Activated T-helper 2 cell treated with anti-CD3 and anti-CD28 coated beads, Interferon-gamma antibody, Interleukin-2, Interleukin-4, amounts not matched to agents 10 μg/mL and 5 μg/mL and 100 μg/mL, durations not matched to agents 14 hours and 24 hours and 36 hours (primary cell): ENCODE measurements at regions of chr9 and their contacts with region 1.

Region 1: GRCh38 chr9:128218518-128219389 is 15.6 kb downstream of the DNM1 start:
- DNase-seq: peak; percentile 94
- H3K4me3 Mint-ChIP-seq: peak overlapping the region; percentile 77
- H3K27ac Mint-ChIP-seq: peak overlapping the region; percentile 26
- H3K4me1 Mint-ChIP-seq: peaks cover 11% of the 10 kb centered on the region
- H3K27me3 Mint-ChIP-seq: no peaks in the 10 kb centered on the region

Region 2: DNA sequence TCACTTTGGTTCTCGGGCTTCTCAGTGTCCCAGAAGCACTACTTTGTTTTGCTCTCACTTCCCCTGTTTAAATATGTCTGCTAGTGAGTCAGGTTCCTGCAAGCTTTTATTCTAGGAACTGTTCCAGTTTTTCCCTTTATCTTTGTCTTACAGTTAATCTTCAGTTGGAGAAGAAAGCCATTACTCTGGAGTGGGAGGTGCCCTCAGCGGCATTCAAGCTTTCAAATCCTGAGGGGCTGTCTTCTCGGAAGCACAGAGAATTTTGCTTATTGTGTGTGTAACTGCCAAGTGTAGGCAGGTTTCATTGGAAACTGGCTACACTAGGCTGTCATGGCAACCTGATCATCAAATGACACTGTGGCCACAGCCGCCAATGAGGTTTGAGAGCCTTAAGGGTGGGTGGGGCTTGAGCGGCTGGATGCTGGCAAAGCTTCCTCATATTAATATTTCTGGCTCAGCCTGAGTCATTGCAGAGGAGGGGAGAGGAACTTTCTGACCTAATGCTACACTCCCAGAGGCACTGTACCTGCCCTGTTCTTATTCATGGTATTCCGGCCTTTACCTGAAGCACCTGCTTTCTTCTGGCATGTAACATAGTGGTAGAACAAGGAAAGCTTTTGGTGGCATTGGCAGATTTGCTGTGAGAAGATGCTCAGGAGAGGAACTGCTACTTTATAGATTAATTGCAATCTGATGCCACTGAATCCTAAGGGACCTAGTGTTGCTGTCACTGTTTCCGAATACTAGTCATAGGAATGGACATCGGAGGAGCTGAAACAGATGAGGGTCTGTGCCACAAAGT is 124.4 kb before region 1 on chr9:
- intact Hi-C with region 1: no loop called
- DNase-seq: peak; percentile 77
- H3K4me3 Mint-ChIP-seq: peak overlapping the region; percentile 60
- H3K27ac Mint-ChIP-seq: peak overlapping the region; percentile 98
- H3K4me1 Mint-ChIP-seq: peaks cover 66% of the 10 kb centered on the region
- H3K27me3 Mint-ChIP-seq: no peaks in the 10 kb centered on the region

Region 3: DNA sequence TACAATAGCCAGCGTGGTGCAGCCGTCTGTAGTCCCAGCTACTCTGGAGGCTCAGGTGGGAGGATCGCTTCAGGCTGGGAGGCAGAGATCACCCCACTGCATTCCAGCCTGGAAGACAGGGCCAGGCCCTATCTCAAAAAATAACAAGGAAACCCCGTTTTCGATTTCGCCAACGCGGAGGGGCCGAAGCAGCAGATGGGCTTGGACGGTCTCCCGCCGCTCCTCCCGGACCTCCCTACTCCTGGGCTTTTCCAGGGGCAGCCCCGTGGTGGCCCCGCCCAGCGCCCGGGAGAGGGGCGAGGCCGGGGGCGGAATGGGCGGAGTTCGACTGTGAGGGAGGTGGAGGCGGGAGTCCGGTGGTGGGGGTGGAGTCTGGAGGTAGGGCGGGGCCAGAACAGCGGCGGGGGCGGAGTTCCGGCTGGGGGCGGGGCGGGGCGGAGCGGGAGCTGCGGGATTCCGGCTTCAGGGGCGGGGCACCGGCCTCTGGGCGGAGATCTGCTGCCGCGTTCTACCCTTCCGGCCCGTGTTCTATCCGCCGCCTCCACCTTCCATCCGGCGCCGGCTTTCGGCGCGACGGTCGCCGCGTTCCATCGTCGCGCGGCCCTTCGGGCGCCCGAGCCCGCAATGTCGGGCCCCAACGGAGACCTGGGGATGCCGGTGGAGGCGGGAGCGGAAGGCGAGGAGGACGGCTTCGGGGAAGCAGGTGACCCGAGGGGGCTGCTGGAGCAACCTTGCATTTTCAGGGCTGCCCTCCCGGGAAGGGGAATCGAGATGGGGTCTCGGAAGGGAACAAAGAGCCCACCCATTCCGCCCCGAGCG is 58.8 kb before region 1 on chr9 and contains the start of gene BBLN:
- intact Hi-C with region 1: loop called (anchors 2 kb)
- DNase-seq: peak; percentile 90
- H3K4me3 Mint-ChIP-seq: peak within 1 kb of the TSS; percentile 81
- H3K27ac Mint-ChIP-seq: peak within 1 kb of the TSS; percentile 83
- H3K4me1 Mint-ChIP-seq: peaks cover 17% of the 10 kb centered on the region
- H3K27me3 Mint-ChIP-seq: no peaks in the 10 kb centered on the region
- total RNA-seq, gene BBLN: 93.8 and 103 TPM in 2 replicates

Region 4: DNA sequence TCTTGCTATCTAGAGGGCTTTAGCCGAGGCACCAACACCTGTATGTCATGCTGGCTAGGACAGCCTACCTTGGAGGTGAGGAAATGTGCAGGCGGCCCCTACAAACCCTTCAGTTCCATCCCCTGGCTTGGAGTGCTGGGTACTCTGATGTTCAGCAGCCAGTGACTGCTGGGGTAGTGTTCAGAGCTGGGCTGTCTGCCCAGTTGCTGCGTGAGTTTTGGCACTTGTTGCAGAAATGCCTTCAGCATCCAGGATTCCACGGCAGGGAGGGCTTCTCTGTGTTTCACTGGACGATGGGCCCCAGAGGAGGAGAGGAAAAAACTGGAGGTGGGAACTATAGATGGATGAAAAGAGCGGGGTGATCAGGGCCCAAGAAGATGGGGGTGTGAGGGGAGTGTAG is 67.7 kb after region 1 on chr9:
- intact Hi-C with region 1: no loop called
- DNase-seq: no peak
- H3K4me3 Mint-ChIP-seq: no peak overlapping the region
- H3K27ac Mint-ChIP-seq: no peak overlapping the region
- H3K4me1 Mint-ChIP-seq: no peaks in the 10 kb centered on the region
- H3K27me3 Mint-ChIP-seq: no peaks in the 10 kb centered on the region

Region 5: GRCh38 chr9:128304149-128304974 is 85.6 kb after region 1 on chr9:
- intact Hi-C with region 1: no loop called
- DNase-seq: no peak
- H3K4me3 Mint-ChIP-seq: no peak overlapping the region
- H3K27ac Mint-ChIP-seq: no peak overlapping the region
- H3K4me1 Mint-ChIP-seq: no peaks in the 10 kb centered on the region
- H3K27me3 Mint-ChIP-seq: no peaks in the 10 kb centered on the region

Region 6: GRCh38 chr9:128344931-128345605 is 126.3 kb after region 1 on chr9:
- intact Hi-C with region 1: no loop called
- DNase-seq: no peak
- H3K4me3 Mint-ChIP-seq: no peak overlapping the region
- H3K27ac Mint-ChIP-seq: no peak overlapping the region
- H3K4me1 Mint-ChIP-seq: peaks cover 4% of the 10 kb centered on the region
- H3K27me3 Mint-ChIP-seq: no peaks in the 10 kb centered on the region